GM13977 (cell line): ENCODE measurements at regions of chr1 and their contacts with region 1.

Region 1: DNA sequence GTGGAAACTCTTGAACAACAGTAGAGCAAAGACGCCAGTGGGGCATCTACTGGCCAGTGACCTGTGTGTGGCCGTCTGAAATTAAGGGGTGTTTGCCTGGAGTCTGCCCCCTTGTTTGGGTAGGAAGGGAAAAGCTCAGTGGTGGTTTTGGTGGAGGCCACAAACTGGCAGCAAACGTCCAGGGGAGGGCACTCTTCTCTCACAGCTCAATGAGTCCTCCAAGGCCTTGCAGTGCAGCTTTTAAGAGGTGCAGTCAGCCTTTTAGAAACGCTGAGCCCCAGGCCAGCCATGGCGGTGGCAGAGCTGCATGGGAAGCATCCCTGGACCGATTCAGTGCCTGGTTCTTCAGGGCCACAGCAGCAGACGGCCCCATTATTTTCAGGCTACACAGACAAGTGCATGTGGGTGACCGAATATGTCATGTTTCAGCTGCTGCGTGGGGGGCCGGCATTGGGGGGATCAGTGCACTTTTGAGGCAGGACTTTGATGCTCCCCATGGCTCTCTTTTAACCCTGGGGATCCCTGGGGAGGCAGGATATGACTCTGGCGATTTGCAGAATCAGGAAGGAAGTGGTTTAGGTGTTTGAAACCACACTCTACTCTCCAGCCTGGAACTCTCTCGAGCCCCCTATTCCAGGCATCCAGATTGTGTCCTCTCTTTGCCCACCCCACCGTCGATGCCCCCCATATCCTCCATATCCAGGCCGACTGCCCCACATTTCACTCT is 414.0 kb downstream of the PRDM2 start:
- DNase-seq: peak; percentile 36
- CTCF ChIP-seq: peak; percentile 53

Region 2: DNA sequence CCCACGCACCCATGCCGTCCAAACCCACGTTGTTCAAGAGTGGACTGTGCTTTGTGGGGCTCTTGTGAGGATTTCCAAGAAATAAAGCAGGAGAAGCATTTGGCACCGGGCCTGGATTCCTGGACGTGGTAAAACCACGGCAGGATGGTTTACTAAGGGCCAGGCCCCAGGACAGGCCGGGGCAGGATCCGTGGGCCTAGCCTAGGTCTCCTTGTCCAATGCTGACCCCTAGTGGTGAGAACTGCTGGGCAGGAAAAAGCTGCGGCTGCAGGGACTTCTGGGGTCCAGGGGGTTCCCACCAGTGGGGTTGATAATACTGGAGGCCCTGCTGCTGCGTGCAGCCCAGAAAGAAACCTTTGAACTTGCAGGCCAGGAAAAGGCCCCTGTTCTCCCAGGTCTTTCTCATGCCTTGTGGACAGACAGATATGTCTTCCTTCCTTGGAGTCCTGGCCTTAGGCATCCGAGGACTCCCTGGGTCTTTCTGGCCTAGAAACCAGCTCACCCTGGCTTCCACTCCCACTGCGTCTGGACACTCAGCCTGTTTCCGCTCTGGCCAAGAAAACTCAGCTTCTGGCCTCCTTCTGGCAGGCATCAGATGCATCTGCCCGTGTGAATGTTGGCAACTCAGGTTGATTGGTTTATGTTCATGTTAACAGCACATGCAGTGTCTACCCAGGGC is 932.6 kb after region 1 on chr1:
- in situ Hi-C with region 1: loop called (anchors 25 kb)
- DNase-seq: peak; percentile 88
- CTCF ChIP-seq: peak; percentile 90